K562 (cell line): ENCODE measurements at regions of chr4 and their contacts with region 1.

Region 1: DNA sequence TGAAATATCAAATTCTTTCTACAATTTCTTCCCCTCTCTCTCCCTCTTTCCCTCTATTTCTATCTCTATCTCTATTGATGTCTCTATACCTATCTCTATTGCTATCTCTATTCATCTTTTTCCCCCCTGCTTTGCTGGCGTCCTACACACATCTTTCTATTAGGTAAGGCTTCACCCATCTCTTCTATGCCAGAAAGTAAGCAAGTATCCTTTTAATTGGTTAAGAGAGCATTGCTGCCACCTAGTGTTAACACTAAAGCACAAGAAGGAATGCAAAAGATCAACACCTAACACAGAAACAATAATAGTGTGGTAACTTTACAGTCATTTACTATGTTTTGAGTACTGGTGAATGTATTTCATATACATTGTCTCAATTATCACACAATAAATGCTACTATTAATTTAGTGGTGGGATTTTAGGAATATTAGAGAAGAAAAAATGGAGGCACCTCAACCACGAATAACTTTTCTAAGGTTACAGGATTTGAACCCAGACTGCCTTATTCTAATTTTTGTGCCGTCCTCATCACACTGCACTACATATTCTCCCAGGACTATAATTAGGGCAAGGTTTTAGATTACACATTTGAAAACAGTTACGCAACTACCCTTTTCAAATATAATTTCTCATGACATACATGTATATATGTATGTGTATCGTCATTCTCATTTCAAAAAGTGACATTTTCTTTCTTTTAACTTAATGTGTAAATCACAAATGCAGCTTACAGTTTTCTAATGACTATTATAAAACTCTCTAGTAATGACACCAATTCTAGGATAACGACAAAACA is 3.7 kb upstream of the C4orf36 start:
- DNase-seq: peak; percentile 46 to 72 (median 50)
- ATAC-seq: peak; percentile 62
- H3K4me3 ChIP-seq: no peak overlapping the region
- H3K27ac ChIP-seq: no peak overlapping the region
- H3K4me1 ChIP-seq: peaks cover 6 to 10% of the 10 kb centered on the region in 2 experiments; a peak in 3 of 5 replicates
- H3K27me3 ChIP-seq: no peaks in the 10 kb centered on the region; a peak in 2 of 5 replicates
- CTCF ChIP-seq: peak; percentile 65 to 85 (median 69); a peak in 5 of 6 replicates
- EP300 ChIP-seq: no peak
- POLR2A ChIP-seq: no peak
- RAD21 ChIP-seq: peak; percentile 80 to 89

Region 2: DNA sequence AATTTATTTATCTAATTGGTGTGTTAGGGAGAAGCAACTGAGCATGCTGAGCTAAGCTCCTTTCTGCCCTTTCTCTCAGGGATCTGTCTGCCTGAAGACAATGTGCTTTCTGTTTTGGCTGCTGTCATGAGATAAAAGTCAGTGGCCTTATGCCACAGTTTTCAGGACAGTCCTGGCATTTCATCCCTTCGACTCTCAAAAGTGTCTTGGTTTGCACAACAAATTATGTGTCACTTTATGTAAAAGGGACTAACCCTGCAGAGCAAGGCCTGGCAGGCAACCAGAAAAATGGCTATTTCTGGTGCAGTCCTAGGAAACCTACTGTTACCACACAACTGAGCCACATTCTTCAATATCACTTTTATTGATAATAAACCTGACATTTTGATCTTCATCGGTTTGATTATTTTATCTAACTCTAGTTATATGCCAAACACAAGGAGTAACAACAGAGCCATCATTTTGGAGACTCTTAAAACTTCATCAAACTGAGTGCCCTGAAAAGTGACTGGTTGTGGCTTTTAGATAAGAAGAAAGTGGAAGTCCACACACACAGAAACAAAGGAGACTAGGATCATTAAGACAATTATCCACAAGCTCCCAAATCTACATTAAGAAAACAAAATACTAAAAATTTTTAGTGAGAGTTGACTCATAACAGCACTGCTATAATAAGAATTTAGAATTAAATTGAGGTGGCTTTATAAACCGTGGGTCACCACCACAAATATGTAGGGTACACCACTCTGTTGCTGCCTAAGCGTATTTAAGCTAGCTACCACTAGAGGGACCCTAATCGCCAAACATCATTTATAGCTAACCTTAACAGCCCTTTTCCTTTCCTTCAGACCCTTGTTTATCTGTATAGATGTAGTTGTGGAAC is 397.7 kb before region 1 on chr4:
- CTCF ChIA-PET with region 1: interaction called, 18 read pairs
- POLR2A ChIA-PET with region 1: interaction called, 3 read pairs
- in situ Hi-C with region 1: loop called (anchors 5 kb)
- intact Hi-C with region 1: loop called (anchors 1 kb)
- DNase-seq: peak; percentile 34 to 52 (median 47)
- ATAC-seq: peak; percentile 91
- H3K4me3 ChIP-seq: no peak overlapping the region
- H3K27ac ChIP-seq: no peak overlapping the region
- H3K4me1 ChIP-seq: no peaks in the 10 kb centered on the region
- H3K27me3 ChIP-seq: no peaks in the 10 kb centered on the region
- CTCF ChIP-seq: peak; percentile 49 to 72 (median 62)
- EP300 ChIP-seq: no peak
- POLR2A ChIP-seq: no peak
- RAD21 ChIP-seq: peak; percentile 35 to 52; a peak in 3 of 4 replicates

Region 3: GRCh38 chr4:86791126-86791525 is 104.8 kb before region 1 on chr4:
- CTCF ChIA-PET with region 1: no interaction called
- POLR2A ChIA-PET with region 1: no interaction called
- in situ Hi-C with region 1: no loop called
- intact Hi-C with region 1: loop called (anchors 5 kb)
- DNase-seq: peak in 2 of 4 experiments; percentile 8 to 69
- ATAC-seq: peak; percentile 96
- H3K4me3 ChIP-seq: no peak overlapping the region
- H3K27ac ChIP-seq: no peak overlapping the region
- H3K4me1 ChIP-seq: no peaks in the 10 kb centered on the region; a peak in 1 of 5 replicates
- H3K27me3 ChIP-seq: no peaks in the 10 kb centered on the region; a peak in 1 of 5 replicates
- CTCF ChIP-seq: peak; percentile 42 to 81 (median 51)
- EP300 ChIP-seq: no peak
- POLR2A ChIP-seq: no peak
- RAD21 ChIP-seq: peak in 1 of 2 experiments; percentile 17; a peak in 1 of 4 replicates

Region 4: GRCh38 chr4:87150498-87151261 is 254.8 kb after region 1 on chr4:
- CTCF ChIA-PET with region 1: interaction called, 3 read pairs
- POLR2A ChIA-PET with region 1: no interaction called
- in situ Hi-C with region 1: no loop called
- intact Hi-C with region 1: loop called (anchors 1 kb)
- DNase-seq: peak; percentile 51 to 79 (median 54)
- ATAC-seq: peak; percentile 89
- H3K4me3 ChIP-seq: no peak overlapping the region
- H3K27ac ChIP-seq: no peak overlapping the region
- H3K4me1 ChIP-seq: no peaks in the 10 kb centered on the region
- H3K27me3 ChIP-seq: no peaks in the 10 kb centered on the region
- CTCF ChIP-seq: peak; percentile 72 to 93 (median 85)
- EP300 ChIP-seq: no peak
- POLR2A ChIP-seq: no peak
- RAD21 ChIP-seq: peak; percentile 81 to 90

Region 5: DNA sequence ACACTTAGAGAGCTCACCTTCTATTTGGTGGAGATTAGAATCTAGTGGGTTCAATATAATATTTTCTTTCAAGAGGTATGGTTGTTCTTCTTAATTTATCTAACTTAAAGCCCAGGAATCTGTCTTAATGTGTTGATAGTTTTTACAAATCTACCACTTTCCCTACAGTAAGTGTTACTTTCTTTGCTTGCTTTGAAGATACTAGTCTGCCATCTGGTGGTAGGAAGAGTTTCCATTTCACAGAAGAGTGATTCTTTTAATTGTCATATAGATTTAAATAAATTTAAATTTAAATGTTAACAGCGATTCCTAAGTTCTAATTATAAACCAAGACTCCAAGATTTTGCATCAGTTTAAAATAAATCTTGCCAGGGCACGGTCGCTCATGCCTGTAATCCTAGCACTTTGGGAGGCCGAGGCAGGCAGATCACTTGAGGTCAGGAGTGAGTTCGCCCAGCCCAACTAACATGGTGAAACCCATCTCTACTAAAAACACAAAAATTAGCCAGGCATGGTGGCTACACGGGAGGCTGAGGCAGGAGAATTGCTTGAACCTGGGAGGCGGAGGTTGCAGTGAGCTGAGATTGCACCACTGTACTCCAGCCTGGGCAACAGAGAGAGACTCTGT is 570.0 kb after region 1 on chr4:
- CTCF ChIA-PET with region 1: interaction called, 5 read pairs
- POLR2A ChIA-PET with region 1: no interaction called
- in situ Hi-C with region 1: no loop called
- intact Hi-C with region 1: loop called (anchors 2 kb)
- DNase-seq: peak; percentile 18 to 60 (median 20)
- ATAC-seq: peak; percentile 84
- H3K4me3 ChIP-seq: no peak overlapping the region
- H3K27ac ChIP-seq: no peak overlapping the region
- H3K4me1 ChIP-seq: no peaks in the 10 kb centered on the region
- H3K27me3 ChIP-seq: no peaks in the 10 kb centered on the region
- CTCF ChIP-seq: peak; percentile 40 to 83 (median 57); a peak in 4 of 6 replicates
- EP300 ChIP-seq: no peak
- POLR2A ChIP-seq: no peak
- RAD21 ChIP-seq: peak; percentile 86 to 90